ENCODE measurements at regions of chr7 and their contacts with region 1.

Region 1: DNA sequence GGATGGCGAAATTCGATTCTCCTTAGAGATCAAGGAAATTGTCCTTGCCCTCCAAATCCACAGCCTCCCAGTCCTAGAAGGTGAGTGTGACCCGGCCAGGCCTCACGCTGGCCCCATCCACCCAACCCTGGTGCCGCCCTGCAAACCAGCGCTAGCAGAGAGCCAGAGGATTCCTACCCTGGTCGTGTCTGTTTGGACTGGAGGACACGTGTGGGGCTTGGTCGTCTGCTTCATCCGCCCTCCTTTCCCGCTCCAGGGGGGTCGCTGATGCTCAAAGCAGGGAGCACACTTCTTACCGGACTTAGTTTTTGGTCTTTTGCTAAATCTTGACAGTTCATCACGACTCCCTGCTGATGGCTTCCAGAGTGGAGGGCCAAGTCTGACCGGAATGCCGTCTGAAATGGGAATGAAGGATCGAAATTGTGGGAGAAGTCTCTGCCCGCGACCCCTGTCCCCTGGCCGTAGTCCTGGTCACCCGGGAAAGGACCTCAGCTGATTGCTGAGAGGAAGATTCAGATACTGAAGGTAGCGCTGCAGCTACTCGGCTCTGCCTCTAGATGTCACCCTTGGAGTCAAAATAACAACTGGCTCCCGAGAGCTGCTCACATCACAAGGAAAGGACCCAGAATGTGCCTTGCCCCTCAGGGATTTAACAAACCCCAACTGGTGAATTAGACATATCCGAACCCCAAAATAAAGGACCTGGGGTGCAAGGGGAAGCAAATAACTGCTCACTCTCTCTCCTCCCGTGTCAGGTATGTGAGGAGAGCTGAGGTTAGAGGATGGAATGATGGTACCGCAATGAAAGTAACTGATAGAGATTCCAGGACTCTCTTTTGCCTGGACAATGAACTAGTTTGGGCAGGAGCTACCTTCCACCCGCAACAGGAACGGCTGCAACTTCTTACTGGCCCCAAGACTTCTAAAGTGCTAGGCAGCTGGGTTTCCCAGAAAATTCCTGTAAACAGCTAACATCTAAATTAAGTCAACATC is 23.5 kb upstream of the ORC5 start:
- DNase-seq: peak; percentile 30
- H3K4me3 ChIP-seq: no peak overlapping the region
- H3K27ac ChIP-seq: no peak overlapping the region
- H3K4me1 ChIP-seq: no peaks in the 10 kb centered on the region
- H3K27me3 ChIP-seq: no peaks in the 10 kb centered on the region
- CTCF ChIP-seq: peak; percentile 76 to 88

Region 2: DNA sequence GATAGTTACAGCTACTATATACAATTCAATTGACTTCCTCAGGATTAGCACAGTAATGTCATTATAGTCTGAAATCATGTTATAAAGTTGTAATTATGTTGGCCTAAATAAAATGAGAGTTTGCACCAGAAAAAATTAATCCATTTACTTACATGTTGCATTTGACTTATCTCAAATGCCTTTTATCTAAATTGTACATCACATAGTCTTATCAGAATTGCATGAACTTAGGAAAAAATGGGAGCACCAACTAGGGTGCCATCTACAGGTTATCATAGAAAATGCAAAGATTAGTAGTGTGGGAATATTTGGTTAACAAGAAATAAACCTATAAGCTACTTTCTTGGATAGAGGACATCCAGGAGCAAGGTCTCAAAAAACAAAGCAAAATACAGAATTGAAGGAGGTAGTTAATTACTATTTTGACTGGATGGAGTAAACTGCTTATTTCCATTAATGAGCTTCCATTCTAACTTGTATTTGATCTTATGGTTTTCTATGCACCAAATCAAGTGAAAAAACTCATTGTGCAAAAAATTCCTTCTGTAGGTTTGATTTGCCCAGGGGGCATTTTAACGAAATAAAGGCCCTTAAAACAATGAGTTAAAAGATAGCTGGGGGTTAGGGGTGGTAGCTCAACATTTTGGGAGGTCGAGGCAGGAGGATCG is 36.5 kb after region 1 on chr7:
- CTCF ChIA-PET with region 1: interaction called, 12 read pairs
- dilution Hi-C with region 1: no loop called
- in situ Hi-C with region 1: no loop called
- intact Hi-C with region 1: loop called (anchors 1 kb)
- DNase-seq: peak; percentile 6
- H3K4me3 ChIP-seq: no peak overlapping the region
- H3K27ac ChIP-seq: no peak overlapping the region
- H3K4me1 ChIP-seq: no peaks in the 10 kb centered on the region
- H3K27me3 ChIP-seq: no peaks in the 10 kb centered on the region
- CTCF ChIP-seq: peak; percentile 47 to 66

Region 3: GRCh38 chr7:104388222-104388621 is 156.9 kb after region 1 on chr7:
- CTCF ChIA-PET with region 1: no interaction called
- dilution Hi-C with region 1: no loop called
- in situ Hi-C with region 1: no loop called
- intact Hi-C with region 1: no loop called
- DNase-seq: no peak
- H3K4me3 ChIP-seq: no peak overlapping the region
- H3K27ac ChIP-seq: no peak overlapping the region
- H3K4me1 ChIP-seq: no peaks in the 10 kb centered on the region
- H3K27me3 ChIP-seq: no peaks in the 10 kb centered on the region
- CTCF ChIP-seq: no peak

Region 4: GRCh38 chr7:104469166-104469820 is 237.9 kb after region 1 on chr7:
- CTCF ChIA-PET with region 1: no interaction called
- dilution Hi-C with region 1: no loop called
- in situ Hi-C with region 1: no loop called
- intact Hi-C with region 1: no loop called
- DNase-seq: no peak
- H3K4me3 ChIP-seq: no peak overlapping the region
- H3K27ac ChIP-seq: no peak overlapping the region
- H3K4me1 ChIP-seq: no peaks in the 10 kb centered on the region
- H3K27me3 ChIP-seq: no peaks in the 10 kb centered on the region
- CTCF ChIP-seq: no peak